Naive thymus-derived CD4-positive, alpha-beta T cell (primary cell): ENCODE measurements at regions of chr14 and their contacts with region 1.

Region 1: GRCh38 chr14:74084277-74085046 is at the starts of genes ALDH6A1 and LIN52:
- DNase-seq: peak; percentile 90 to 100 (median 100)
- ATAC-seq: peak; percentile 92
- H3K4me3 ChIP-seq: peak within 1 kb of the TSS; percentile 78
- H3K4me3 Mint-ChIP-seq: peak within 1 kb of the TSS; percentile 89 to 100 (median 96)
- H3K27ac ChIP-seq: peak within 1 kb of the TSS; percentile 77
- H3K27ac Mint-ChIP-seq: peak within 1 kb of the TSS; percentile 90 to 99 (median 94)
- H3K4me1 ChIP-seq: peaks cover 10 to 16% of the 10 kb centered on the region in 2 donors
- H3K4me1 Mint-ChIP-seq: peaks cover 23 to 62% (median 44%) of the 10 kb centered on the region in 7 donors
- H3K27me3 ChIP-seq: no peaks in the 10 kb centered on the region
- H3K27me3 Mint-ChIP-seq: peaks cover 0 to 4% (median 0%) of the 10 kb centered on the region in 5 donors
- total RNA-seq, gene ALDH6A1: 8.9 to 23.7 (median 19.2) TPM
- total RNA-seq, gene LIN52: 6.6 to 16.3 (median 9.4) TPM

Region 2: GRCh38 chr14:73058224-73058921 is 1026.1 kb before region 1 on chr14 and contains the start of gene RBM25:
- CTCF ChIA-PET with region 1: no interaction called
- POLR2A ChIA-PET with region 1: no interaction called
- intact Hi-C with region 1: loop called in 1 of 2 experiments (anchors 1 kb)
- DNase-seq: peak; percentile 85 to 98 (median 96)
- ATAC-seq: peak; percentile 99
- H3K4me3 ChIP-seq: peak within 1 kb of the TSS; percentile 77
- H3K4me3 Mint-ChIP-seq: no peak within 1 kb of the TSS
- H3K27ac ChIP-seq: peak within 1 kb of the TSS; percentile 92
- H3K27ac Mint-ChIP-seq: no peak within 1 kb of the TSS
- H3K4me1 ChIP-seq: peaks cover 30 to 36% of the 10 kb centered on the region in 2 donors
- H3K4me1 Mint-ChIP-seq: peaks cover 19 to 45% (median 30%) of the 10 kb centered on the region in 7 donors
- H3K27me3 ChIP-seq: no peaks in the 10 kb centered on the region
- H3K27me3 Mint-ChIP-seq: no peaks in the 10 kb centered on the region
- total RNA-seq, gene RBM25: 111 to 168 (median 146) TPM

Region 3: GRCh38 chr14:73491256-73492042 is 593.0 kb before region 1 on chr14:
- CTCF ChIA-PET with region 1: no interaction called
- POLR2A ChIA-PET with region 1: no interaction called
- intact Hi-C with region 1: loop called (anchors 1 to 2 kb)
- DNase-seq: peak in 8 of 9 donors; percentile 7 to 79 (median 60)
- ATAC-seq: peak; percentile 79
- H3K4me3 ChIP-seq: peak overlapping the region; percentile 91
- H3K4me3 Mint-ChIP-seq: peak overlapping the region; percentile 84 to 90 (median 88)
- H3K27ac ChIP-seq: peak overlapping the region; percentile 86
- H3K27ac Mint-ChIP-seq: peak overlapping the region in 8 of 9 donors; percentile 83 to 90 (median 88)
- H3K4me1 ChIP-seq: peaks cover 21 to 27% of the 10 kb centered on the region in 2 donors
- H3K4me1 Mint-ChIP-seq: peaks cover 8 to 59% (median 48%) of the 10 kb centered on the region in 7 donors
- H3K27me3 ChIP-seq: no peaks in the 10 kb centered on the region
- H3K27me3 Mint-ChIP-seq: peaks cover 0 to 17% (median 0%) of the 10 kb centered on the region in 5 donors

Region 4: GRCh38 chr14:73759714-73760597 is 324.5 kb before region 1 on chr14:
- CTCF ChIA-PET with region 1: no interaction called
- POLR2A ChIA-PET with region 1: no interaction called
- intact Hi-C with region 1: loop called (anchors 1 to 10 kb)
- DNase-seq: peak; percentile 91 to 97 (median 93)
- ATAC-seq: peak; percentile 89
- H3K4me3 ChIP-seq: peak overlapping the region; percentile 72
- H3K4me3 Mint-ChIP-seq: peak overlapping the region; percentile 85 to 96 (median 90)
- H3K27ac ChIP-seq: peak overlapping the region; percentile 86
- H3K27ac Mint-ChIP-seq: peak overlapping the region; percentile 95 to 98 (median 97)
- H3K4me1 ChIP-seq: peaks cover 63 to 65% of the 10 kb centered on the region in 2 donors
- H3K4me1 Mint-ChIP-seq: peaks cover 57 to 87% (median 79%) of the 10 kb centered on the region in 7 donors
- H3K27me3 ChIP-seq: no peaks in the 10 kb centered on the region
- H3K27me3 Mint-ChIP-seq: no peaks in the 10 kb centered on the region

Region 5: GRCh38 chr14:73949744-73950734 is 134.4 kb before region 1 on chr14 and contains the starts of genes COQ6 and FAM161B:
- CTCF ChIA-PET with region 1: no interaction called
- POLR2A ChIA-PET with region 1: no interaction called
- intact Hi-C with region 1: loop called (anchors 1 kb)
- DNase-seq: peak; percentile 82 to 97 (median 95)
- ATAC-seq: peak; percentile 96
- H3K4me3 ChIP-seq: peak within 1 kb of the TSS; percentile 92
- H3K4me3 Mint-ChIP-seq: peak within 1 kb of the TSS; percentile 96 to 99 (median 98)
- H3K27ac ChIP-seq: peak within 1 kb of the TSS; percentile 94
- H3K27ac Mint-ChIP-seq: peak within 1 kb of the TSS; percentile 93 to 98 (median 95)
- H3K4me1 ChIP-seq: peaks cover 0 to 4% of the 10 kb centered on the region in 2 donors
- H3K4me1 Mint-ChIP-seq: peaks cover 5 to 34% (median 27%) of the 10 kb centered on the region in 7 donors
- H3K27me3 ChIP-seq: no peaks in the 10 kb centered on the region
- H3K27me3 Mint-ChIP-seq: no peaks in the 10 kb centered on the region
- total RNA-seq, gene COQ6: 22.8 to 47.3 (median 36.4) TPM
- total RNA-seq, gene FAM161B: 1.8 to 6.6 (median 3.7) TPM

Region 6: DNA sequence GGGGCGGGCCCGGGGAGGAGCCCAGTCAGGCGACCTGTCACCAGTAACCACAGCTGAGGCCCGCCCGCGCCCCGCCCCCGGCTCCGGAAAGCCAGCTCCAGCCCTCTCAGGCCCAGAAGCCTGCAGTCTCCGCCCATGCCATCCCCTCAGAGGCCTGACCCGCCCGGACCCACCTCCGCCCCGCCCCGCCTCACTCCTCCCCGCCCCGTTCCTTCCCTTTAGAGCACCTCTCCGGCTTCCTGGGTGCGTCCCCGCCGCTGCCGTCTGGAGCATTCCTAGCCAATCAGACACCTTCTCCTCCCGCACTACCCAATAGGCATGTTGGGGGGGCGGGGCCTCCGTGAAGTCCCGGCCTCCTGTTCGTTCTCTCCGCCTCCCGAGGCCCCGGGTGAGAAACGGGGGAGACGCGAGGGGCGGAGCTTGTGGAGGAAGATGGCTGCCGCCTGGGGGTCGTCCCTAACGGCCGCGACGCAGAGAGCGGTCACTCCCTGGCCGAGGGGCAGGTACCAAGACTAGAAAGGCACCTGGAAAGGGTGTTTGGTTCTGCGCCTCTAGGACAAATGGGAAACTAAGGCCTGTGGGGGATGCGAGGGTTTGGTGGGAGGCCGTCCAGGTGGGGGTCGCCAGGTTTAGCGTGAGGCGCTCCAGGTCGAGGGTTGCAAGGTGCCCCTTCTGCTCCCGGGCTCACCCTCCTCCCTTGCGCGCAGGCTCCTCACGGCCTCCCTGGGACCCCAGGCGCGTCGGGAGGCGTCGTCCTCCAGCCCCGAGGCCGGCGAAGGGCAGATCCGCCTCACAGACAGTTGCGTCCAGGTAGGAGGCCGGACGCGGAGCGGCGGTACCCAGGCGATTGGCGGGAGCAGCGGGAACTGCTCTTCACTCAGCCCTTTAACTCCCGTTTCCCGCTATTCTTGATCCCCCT is 409.1 kb after region 1 on chr14 and contains the start of gene ISCA2:
- CTCF ChIA-PET with region 1: no interaction called
- POLR2A ChIA-PET with region 1: no interaction called
- intact Hi-C with region 1: loop called (anchors 1 kb)
- DNase-seq: peak; percentile 95 to 99 (median 98)
- ATAC-seq: peak; percentile 94
- H3K4me3 ChIP-seq: peak within 1 kb of the TSS; percentile 96
- H3K4me3 Mint-ChIP-seq: peak within 1 kb of the TSS in 1 of 10 donors; percentile 89
- H3K27ac ChIP-seq: peak within 1 kb of the TSS; percentile 91
- H3K27ac Mint-ChIP-seq: peak within 1 kb of the TSS in 7 of 9 donors; percentile 87 to 96 (median 91)
- H3K4me1 ChIP-seq: peaks cover 12 to 18% of the 10 kb centered on the region in 2 donors
- H3K4me1 Mint-ChIP-seq: peaks cover 7 to 45% (median 37%) of the 10 kb centered on the region in 7 donors
- H3K27me3 ChIP-seq: no peaks in the 10 kb centered on the region
- H3K27me3 Mint-ChIP-seq: no peaks in the 10 kb centered on the region
- total RNA-seq, gene ISCA2: 13.9 to 39.5 (median 25.2) TPM

Region 7: GRCh38 chr14:75982266-75983018 is 1898.0 kb after region 1 on chr14:
- CTCF ChIA-PET with region 1: no interaction called
- POLR2A ChIA-PET with region 1: no interaction called
- intact Hi-C with region 1: loop called in 1 of 2 experiments (anchors 10 kb)
- DNase-seq: peak; percentile 69 to 83 (median 80)
- ATAC-seq: peak; percentile 83
- H3K4me3 ChIP-seq: peak overlapping the region; percentile 83
- H3K4me3 Mint-ChIP-seq: peak overlapping the region; percentile 80 to 99 (median 88)
- H3K27ac ChIP-seq: peak overlapping the region; percentile 84
- H3K27ac Mint-ChIP-seq: peak overlapping the region; percentile 58 to 97 (median 90)
- H3K4me1 ChIP-seq: peaks cover 18 to 32% of the 10 kb centered on the region in 2 donors
- H3K4me1 Mint-ChIP-seq: peaks cover 43 to 64% (median 56%) of the 10 kb centered on the region in 7 donors
- H3K27me3 ChIP-seq: no peaks in the 10 kb centered on the region
- H3K27me3 Mint-ChIP-seq: peaks cover 0 to 24% (median 0%) of the 10 kb centered on the region in 5 donors